Calu3 (cell line): ENCODE measurements at regions of chr2 and their contacts with region 1.

Region 1: DNA sequence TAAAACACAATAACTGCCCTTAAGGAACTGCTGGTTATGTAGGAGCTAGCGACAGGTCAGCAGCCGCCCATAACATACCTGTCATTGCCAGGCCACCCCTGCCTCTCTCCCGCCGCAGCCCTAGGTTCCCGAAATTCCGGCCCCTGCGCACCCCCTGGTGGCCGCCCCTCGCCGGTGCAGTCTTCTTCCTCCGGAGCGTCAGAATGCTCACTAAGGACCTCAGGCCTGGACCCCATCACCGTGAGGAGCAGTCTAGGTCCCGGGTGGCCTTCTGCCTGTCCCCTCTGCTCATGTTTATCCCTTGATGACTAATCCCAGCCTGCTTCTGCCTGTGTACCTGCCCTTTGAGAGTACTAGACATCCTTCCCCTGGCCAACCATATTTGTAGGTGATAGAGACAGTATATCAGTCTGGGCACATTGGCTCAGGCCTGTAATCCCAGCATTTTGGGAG is 115.7 kb upstream of the SLC1A4 start:
- DNase-seq: peak; percentile 93
- H3K4me3 Mint-ChIP-seq: no peak overlapping the region
- H3K27ac Mint-ChIP-seq: no peak overlapping the region
- H3K4me1 Mint-ChIP-seq: peaks cover 11% of the 10 kb centered on the region
- H3K27me3 Mint-ChIP-seq: no peaks in the 10 kb centered on the region
- CTCF ChIP-seq: peak; percentile 94

Region 2: DNA sequence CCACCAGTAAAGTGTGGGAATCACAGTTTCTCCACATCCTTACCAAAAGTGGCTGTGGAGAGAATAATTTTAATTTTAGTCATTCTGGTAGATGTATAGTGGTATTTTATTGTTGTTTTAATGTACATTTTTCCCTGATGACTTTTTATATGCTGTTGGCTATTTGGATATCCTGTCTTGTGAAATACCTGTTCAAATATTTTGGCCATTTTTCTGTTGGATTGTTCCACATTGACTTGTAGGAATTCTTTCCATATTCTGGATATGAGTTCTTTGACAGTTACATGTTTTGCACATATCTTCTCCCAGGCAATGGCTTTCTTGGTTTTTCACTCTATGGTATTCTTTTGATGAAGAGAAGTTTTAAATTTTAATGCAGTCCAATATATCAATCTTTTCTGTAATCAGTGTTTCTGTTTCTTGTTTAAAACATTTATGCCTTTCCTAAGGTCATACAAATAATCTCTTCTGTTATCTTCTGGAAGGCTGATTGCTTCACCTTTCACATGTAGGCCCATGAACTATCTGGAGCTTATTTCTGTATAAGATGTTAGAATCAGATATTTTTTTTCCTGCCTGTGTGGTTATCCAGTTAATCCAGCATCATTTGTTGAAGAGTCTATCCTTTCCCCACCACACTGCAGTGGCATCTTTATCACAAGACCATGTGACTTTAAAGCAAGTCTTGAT is 330.3 kb before region 1 on chr2:
- CTCF ChIA-PET with region 1: no interaction called
- intact Hi-C with region 1: no loop called
- DNase-seq: no peak
- H3K4me3 Mint-ChIP-seq: peak overlapping the region; percentile 32
- H3K27ac Mint-ChIP-seq: peak overlapping the region; percentile 57
- H3K4me1 Mint-ChIP-seq: peaks cover 42% of the 10 kb centered on the region
- H3K27me3 Mint-ChIP-seq: no peaks in the 10 kb centered on the region
- CTCF ChIP-seq: no peak

Region 3: GRCh38 chr2:64586883-64587481 is 286.5 kb before region 1 on chr2:
- CTCF ChIA-PET with region 1: interaction called, 3 read pairs
- intact Hi-C with region 1: loop called (anchors 2 kb)
- DNase-seq: no peak
- H3K4me3 Mint-ChIP-seq: no peak overlapping the region
- H3K27ac Mint-ChIP-seq: no peak overlapping the region
- H3K4me1 Mint-ChIP-seq: no peaks in the 10 kb centered on the region
- H3K27me3 Mint-ChIP-seq: no peaks in the 10 kb centered on the region
- CTCF ChIP-seq: peak; percentile 39

Region 4: DNA sequence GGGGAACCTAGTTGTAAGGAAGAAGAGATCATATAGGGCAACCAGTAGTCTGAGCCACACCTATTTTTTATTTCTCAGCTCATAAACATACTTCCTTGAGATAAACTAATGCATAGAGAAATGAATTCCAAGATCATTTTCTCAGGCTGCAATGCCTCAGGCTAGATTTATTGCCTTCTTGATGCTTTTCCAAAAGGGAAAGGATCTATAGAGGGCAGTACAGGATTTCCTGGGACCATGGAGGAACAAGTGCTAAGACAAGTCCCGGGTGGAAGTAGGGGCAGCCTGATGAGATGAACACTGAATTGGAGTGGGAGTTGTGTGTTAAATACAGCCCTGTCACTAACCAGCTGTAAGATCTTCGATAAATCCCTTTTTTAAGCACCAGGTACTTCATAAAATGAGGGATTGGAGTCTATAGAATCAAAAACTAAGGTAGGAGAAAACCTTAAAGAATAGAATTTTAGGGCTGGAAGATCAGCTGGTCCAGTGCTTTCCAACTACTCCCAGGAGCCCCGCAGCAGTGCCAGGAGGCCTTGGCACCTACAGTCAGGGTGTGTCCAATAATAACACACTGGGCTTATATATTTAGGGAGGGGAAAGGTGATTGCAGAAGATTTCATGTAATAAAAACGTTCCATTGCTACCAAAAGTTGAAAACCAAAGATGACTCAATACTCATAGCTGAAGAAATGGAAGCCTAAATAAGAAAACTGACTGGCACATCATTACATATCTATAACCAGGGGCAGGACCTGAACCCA is 277.9 kb before region 1 on chr2:
- CTCF ChIA-PET with region 1: interaction called, 3 read pairs
- intact Hi-C with region 1: loop called (anchors 2 kb)
- DNase-seq: no peak
- H3K4me3 Mint-ChIP-seq: no peak overlapping the region
- H3K27ac Mint-ChIP-seq: no peak overlapping the region
- H3K4me1 Mint-ChIP-seq: peaks cover 11% of the 10 kb centered on the region
- H3K27me3 Mint-ChIP-seq: no peaks in the 10 kb centered on the region
- CTCF ChIP-seq: no peak

Region 5: GRCh38 chr2:64859312-64860212 is 13.9 kb before region 1 on chr2:
- CTCF ChIA-PET with region 1: no interaction called
- intact Hi-C with region 1: no loop called
- DNase-seq: peak; percentile 74
- H3K4me3 Mint-ChIP-seq: peak overlapping the region; percentile 66
- H3K27ac Mint-ChIP-seq: peak overlapping the region; percentile 24
- H3K4me1 Mint-ChIP-seq: peaks cover 10% of the 10 kb centered on the region
- H3K27me3 Mint-ChIP-seq: no peaks in the 10 kb centered on the region
- CTCF ChIP-seq: no peak